CD8-positive, alpha-beta T cell (primary cell): ENCODE measurements at regions of chr7 and their contacts with region 1.

Region 1: GRCh38 chr7:66740302-66740979 is at the start of gene RABGEF1:
- DNase-seq: peak; percentile 91 to 99 (median 98)
- ATAC-seq: peak; percentile 93
- H3K4me3 ChIP-seq: peak within 1 kb of the TSS; percentile 71 to 88
- H3K4me3 Mint-ChIP-seq: peak within 1 kb of the TSS; percentile 94
- H3K27ac ChIP-seq: peak within 1 kb of the TSS; percentile 92 to 95
- H3K27ac Mint-ChIP-seq: peak within 1 kb of the TSS; percentile 98
- H3K4me1 ChIP-seq: peaks cover 18% of the 10 kb centered on the region
- H3K4me1 Mint-ChIP-seq: peaks cover 51% of the 10 kb centered on the region
- H3K27me3 ChIP-seq: no peaks in the 10 kb centered on the region
- H3K27me3 Mint-ChIP-seq: no peaks in the 10 kb centered on the region
- CTCF ChIP-seq: no peak
- total RNA-seq, gene RABGEF1: 34.5 to 38.5 TPM

Region 2: DNA sequence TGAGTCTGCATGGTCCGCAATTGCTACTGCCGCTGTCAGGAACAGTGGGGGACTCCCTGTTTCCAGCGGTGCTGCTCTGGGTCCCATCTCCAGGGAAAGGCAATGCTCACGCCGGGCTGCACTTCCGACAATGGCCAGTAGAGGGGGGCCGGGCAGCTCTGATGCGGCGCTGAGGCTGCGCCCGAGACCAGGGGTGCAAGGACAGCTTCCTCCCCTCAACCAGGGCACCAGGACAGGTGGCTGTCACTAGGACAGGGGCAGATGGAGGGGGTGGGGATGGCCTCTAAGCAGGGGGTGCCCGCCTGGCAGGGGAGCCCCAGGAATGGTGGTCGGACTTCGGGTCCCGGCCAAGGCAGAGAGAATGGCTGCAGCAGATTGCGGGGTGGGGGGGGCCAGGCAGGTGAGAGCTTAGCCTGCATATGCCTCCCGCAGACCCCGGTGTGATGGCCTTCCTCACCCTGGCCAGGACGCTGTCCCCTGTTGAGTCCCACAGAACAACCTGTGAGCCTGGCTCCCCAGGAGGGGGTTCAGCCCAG is 182.8 kb before region 1 on chr7:
- CTCF ChIA-PET with region 1: no interaction called
- POLR2A ChIA-PET with region 1: no interaction called
- intact Hi-C with region 1: loop called (anchors 1 to 10 kb)
- DNase-seq: peak; percentile 52 to 84 (median 73)
- ATAC-seq: peak; percentile 97
- H3K4me3 ChIP-seq: no peak overlapping the region
- H3K4me3 Mint-ChIP-seq: no peak overlapping the region
- H3K27ac ChIP-seq: no peak overlapping the region
- H3K27ac Mint-ChIP-seq: no peak overlapping the region
- H3K4me1 ChIP-seq: peaks cover 5% of the 10 kb centered on the region
- H3K4me1 Mint-ChIP-seq: peaks cover 7% of the 10 kb centered on the region
- H3K27me3 ChIP-seq: no peaks in the 10 kb centered on the region
- H3K27me3 Mint-ChIP-seq: no peaks in the 10 kb centered on the region
- CTCF ChIP-seq: peak; percentile 92

Region 3: GRCh38 chr7:66628361-66629140 is 111.9 kb before region 1 on chr7 and contains the start of gene KCTD7:
- CTCF ChIA-PET with region 1: no interaction called
- POLR2A ChIA-PET with region 1: interaction called, 3 read pairs
- intact Hi-C with region 1: loop called (anchors 1 to 2 kb)
- DNase-seq: peak; percentile 91 to 98 (median 94)
- ATAC-seq: peak; percentile 89
- H3K4me3 ChIP-seq: peak within 1 kb of the TSS; percentile 91 to 99
- H3K4me3 Mint-ChIP-seq: peak within 1 kb of the TSS; percentile 89
- H3K27ac ChIP-seq: peak within 1 kb of the TSS; percentile 89 to 97
- H3K27ac Mint-ChIP-seq: peak within 1 kb of the TSS; percentile 91
- H3K4me1 ChIP-seq: peaks cover 42% of the 10 kb centered on the region
- H3K4me1 Mint-ChIP-seq: peaks cover 51% of the 10 kb centered on the region
- H3K27me3 ChIP-seq: no peaks in the 10 kb centered on the region
- H3K27me3 Mint-ChIP-seq: no peaks in the 10 kb centered on the region
- CTCF ChIP-seq: no peak
- total RNA-seq, gene KCTD7: 12.9 to 13.2 TPM

Region 4: GRCh38 chr7:66681491-66682349 is 58.7 kb before region 1 on chr7:
- CTCF ChIA-PET with region 1: no interaction called
- POLR2A ChIA-PET with region 1: interaction called, 8 read pairs
- intact Hi-C with region 1: loop called (anchors 1 to 2 kb)
- DNase-seq: peak; percentile 87 to 98 (median 97)
- ATAC-seq: peak; percentile 93
- H3K4me3 ChIP-seq: peak overlapping the region; percentile 98
- H3K4me3 Mint-ChIP-seq: peak overlapping the region; percentile 93
- H3K27ac ChIP-seq: peak overlapping the region; percentile 99 to 100
- H3K27ac Mint-ChIP-seq: peak overlapping the region; percentile 97
- H3K4me1 ChIP-seq: peaks cover 13% of the 10 kb centered on the region
- H3K4me1 Mint-ChIP-seq: peaks cover 35% of the 10 kb centered on the region
- H3K27me3 ChIP-seq: no peaks in the 10 kb centered on the region
- H3K27me3 Mint-ChIP-seq: no peaks in the 10 kb centered on the region
- CTCF ChIP-seq: no peak

Region 5: GRCh38 chr7:66768865-66769832 is 28.7 kb after region 1 on chr7:
- CTCF ChIA-PET with region 1: no interaction called
- POLR2A ChIA-PET with region 1: no interaction called
- intact Hi-C with region 1: no loop called
- DNase-seq: no peak
- ATAC-seq: no peak
- H3K4me3 ChIP-seq: no peak overlapping the region
- H3K4me3 Mint-ChIP-seq: no peak overlapping the region
- H3K27ac ChIP-seq: no peak overlapping the region
- H3K27ac Mint-ChIP-seq: peak overlapping the region; percentile 15
- H3K4me1 ChIP-seq: no peaks in the 10 kb centered on the region
- H3K4me1 Mint-ChIP-seq: peaks cover 51% of the 10 kb centered on the region
- H3K27me3 ChIP-seq: no peaks in the 10 kb centered on the region
- H3K27me3 Mint-ChIP-seq: no peaks in the 10 kb centered on the region
- CTCF ChIP-seq: no peak

Region 6: DNA sequence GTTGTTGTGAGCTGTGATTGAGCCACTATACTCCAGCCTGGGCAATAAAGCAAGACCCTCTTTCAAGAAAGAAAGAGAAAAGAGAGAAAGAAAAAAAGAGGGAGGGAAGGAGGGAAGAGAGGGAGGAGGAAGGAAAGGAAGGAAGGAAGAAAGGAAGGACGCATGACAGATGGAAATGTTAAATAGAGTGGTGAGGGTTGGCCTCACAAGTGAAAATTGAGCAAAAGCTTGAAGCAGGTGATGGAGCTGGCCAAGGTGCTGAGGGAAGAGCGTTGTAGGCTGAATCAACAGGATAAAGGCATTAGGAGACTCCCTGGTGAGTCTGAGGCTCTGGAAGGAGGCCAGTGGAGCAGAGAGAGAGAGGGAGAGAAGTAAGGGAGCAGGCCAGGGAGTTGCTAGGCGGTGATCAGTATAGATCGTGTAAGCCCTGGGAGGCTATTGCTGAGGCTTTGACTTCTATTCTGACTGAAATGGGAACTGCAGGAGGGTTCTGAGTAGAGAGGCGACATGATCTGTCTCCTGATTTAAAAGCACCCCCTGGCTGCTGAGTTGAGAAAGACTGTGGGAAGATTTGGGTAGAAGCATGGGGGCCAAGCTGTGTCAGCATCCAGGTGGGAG is 154.1 kb after region 1 on chr7:
- CTCF ChIA-PET with region 1: no interaction called
- POLR2A ChIA-PET with region 1: no interaction called
- intact Hi-C with region 1: no loop called
- DNase-seq: peak in 1 of 9 experiments; percentile 11
- ATAC-seq: no peak
- H3K4me3 ChIP-seq: no peak overlapping the region
- H3K4me3 Mint-ChIP-seq: no peak overlapping the region
- H3K27ac ChIP-seq: no peak overlapping the region
- H3K27ac Mint-ChIP-seq: no peak overlapping the region
- H3K4me1 ChIP-seq: no peaks in the 10 kb centered on the region
- H3K4me1 Mint-ChIP-seq: no peaks in the 10 kb centered on the region
- H3K27me3 ChIP-seq: no peaks in the 10 kb centered on the region
- H3K27me3 Mint-ChIP-seq: no peaks in the 10 kb centered on the region
- CTCF ChIP-seq: no peak

Region 7: DNA sequence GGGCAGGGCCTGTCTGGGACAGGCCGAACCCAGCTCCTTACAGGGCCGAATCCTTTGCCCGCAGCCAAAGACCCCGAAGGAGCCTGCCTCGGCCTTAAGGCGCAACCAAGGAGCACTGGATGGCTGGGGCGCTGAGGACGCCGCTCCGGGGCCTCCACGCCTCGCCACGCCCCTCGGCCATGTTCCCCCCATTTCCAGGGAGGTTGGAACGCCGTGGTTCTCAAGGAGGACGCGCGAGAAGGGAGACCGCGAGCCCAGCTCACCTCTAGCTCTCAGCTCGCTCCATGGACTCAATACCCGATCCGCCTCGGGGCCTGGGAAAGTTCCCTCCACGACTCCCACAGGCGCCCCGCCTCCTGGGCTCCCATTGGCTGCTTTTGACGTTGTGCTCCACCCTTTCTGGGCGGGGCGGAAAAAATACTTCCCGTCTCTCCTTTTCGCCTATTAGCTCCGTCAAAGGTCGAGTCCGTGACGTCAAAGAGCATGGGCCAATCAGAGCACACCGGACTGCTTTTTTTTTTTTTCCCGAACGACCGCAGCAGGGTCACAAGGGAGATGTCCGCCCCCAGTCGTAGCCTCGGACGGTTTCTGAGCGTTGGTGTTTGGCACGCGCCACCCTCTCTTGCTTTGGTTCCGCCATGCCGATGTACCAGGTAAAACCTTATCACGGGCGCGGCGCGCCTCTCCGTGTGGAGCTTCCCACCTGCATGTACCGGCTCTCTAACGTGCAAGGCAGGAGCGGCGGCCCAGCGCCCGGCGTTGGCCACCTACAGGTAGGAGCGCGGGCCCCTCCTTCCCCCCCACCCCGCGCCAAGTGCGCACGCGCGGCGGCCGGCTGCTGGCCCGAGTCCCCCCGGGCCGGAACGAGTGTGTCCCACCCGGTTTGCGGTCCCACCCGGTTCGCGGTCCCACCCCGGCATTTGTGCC is 561.9 kb after region 1 on chr7:
- CTCF ChIA-PET with region 1: no interaction called
- POLR2A ChIA-PET with region 1: no interaction called
- intact Hi-C with region 1: loop called in 1 of 2 experiments (anchors 5 kb)
- DNase-seq: peak; percentile 93 to 99 (median 97)
- ATAC-seq: peak; percentile 77
- H3K4me3 ChIP-seq: peak overlapping the region; percentile 81 to 99
- H3K4me3 Mint-ChIP-seq: peak overlapping the region; percentile 97
- H3K27ac ChIP-seq: peak overlapping the region; percentile 92 to 93
- H3K27ac Mint-ChIP-seq: peak overlapping the region; percentile 99
- H3K4me1 ChIP-seq: no peaks in the 10 kb centered on the region
- H3K4me1 Mint-ChIP-seq: peaks cover 27% of the 10 kb centered on the region
- H3K27me3 ChIP-seq: no peaks in the 10 kb centered on the region
- H3K27me3 Mint-ChIP-seq: no peaks in the 10 kb centered on the region
- CTCF ChIP-seq: no peak